ENCODE measurements at regions of chr4 and their contacts with region 1.

Region 1: GRCh38 chr4:98688411-98689290 is 30.2 kb upstream of the TSPAN5 start:
- DNase-seq: peak; percentile 47
- ATAC-seq: peak; percentile 62
- H3K4me3 ChIP-seq: no peak overlapping the region
- H3K27ac ChIP-seq: no peak overlapping the region
- H3K4me1 ChIP-seq: peaks cover 8% of the 10 kb centered on the region
- H3K27me3 ChIP-seq: no peaks in the 10 kb centered on the region
- CTCF ChIP-seq: no peak

Region 2: GRCh38 chr4:98573791-98574190 is 114.9 kb before region 1 on chr4:
- CTCF ChIA-PET with region 1: no interaction called
- POLR2A ChIA-PET with region 1: no interaction called
- intact Hi-C with region 1: no loop called
- DNase-seq: peak; percentile 93
- ATAC-seq: peak; percentile 37
- H3K4me3 ChIP-seq: no peak overlapping the region
- H3K27ac ChIP-seq: peak overlapping the region; percentile 100
- H3K4me1 ChIP-seq: peaks cover 53% of the 10 kb centered on the region
- H3K27me3 ChIP-seq: no peaks in the 10 kb centered on the region
- CTCF ChIP-seq: no peak

Region 3: GRCh38 chr4:98720871-98721480 is 32.3 kb after region 1 on chr4:
- CTCF ChIA-PET with region 1: no interaction called
- POLR2A ChIA-PET with region 1: no interaction called
- intact Hi-C with region 1: loop called (anchors 5 kb)
- DNase-seq: peak; percentile 91
- ATAC-seq: peak; percentile 75
- H3K4me3 ChIP-seq: peak overlapping the region; percentile 51; the same call in 1 of the 2 replicates
- H3K27ac ChIP-seq: peak overlapping the region; percentile 90
- H3K4me1 ChIP-seq: peaks cover 25% of the 10 kb centered on the region
- H3K27me3 ChIP-seq: no peaks in the 10 kb centered on the region
- CTCF ChIP-seq: no peak